ENCODE measurements at regions of chr6 and their contacts with region 1.

Region 1: DNA sequence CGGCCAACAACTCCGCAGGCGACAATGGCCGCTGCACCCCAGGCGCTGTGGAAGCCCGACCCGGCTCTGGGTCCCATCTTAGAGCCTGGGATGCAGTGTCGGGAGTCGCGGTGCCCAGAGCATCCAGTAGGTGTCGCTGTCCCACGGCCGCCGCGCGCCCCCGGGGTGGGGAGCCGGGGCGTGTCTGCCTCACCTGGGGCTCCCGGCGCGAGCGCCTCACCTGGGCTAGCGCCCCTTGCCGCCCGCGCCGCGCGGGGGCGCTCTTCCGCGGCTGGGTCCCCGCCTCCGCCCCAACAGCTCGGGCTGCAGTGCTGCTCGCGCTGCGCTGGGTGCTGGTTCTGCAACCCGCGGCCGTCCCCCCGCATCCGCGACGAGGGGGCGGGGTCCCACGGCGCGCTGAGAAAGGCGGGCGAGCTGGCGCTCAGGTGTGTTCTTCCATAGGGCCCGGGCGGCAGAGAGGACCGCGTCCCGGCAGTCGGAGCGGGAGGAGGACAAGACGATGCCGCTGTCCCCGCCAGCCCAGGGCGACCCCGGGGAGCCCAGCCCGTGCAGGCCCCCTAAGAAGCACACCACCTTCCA is at the start of gene CRYBG1:
- DNase-seq: peak; percentile 93
- ATAC-seq: peak; percentile 95
- H3K4me3 Mint-ChIP-seq: peak within 1 kb of the TSS; percentile 86
- H3K27ac Mint-ChIP-seq: no peak within 1 kb of the TSS
- H3K4me1 Mint-ChIP-seq: peaks cover 11% of the 10 kb centered on the region
- H3K27me3 Mint-ChIP-seq: peaks cover 18% of the 10 kb centered on the region
- CTCF ChIP-seq: peak; percentile 99
- total RNA-seq, gene CRYBG1: 9.1 to 10.1 TPM (median 9.3 TPM) in 3 replicates

Region 2: GRCh38 chr6:106339334-106340029 is 21.0 kb before region 1 on chr6:
- CTCF ChIA-PET with region 1: interaction called, 38 read pairs
- POLR2A ChIA-PET with region 1: no interaction called
- DNase-seq: peak; percentile 57
- ATAC-seq: peak; percentile 99
- H3K4me3 Mint-ChIP-seq: no peak overlapping the region
- H3K27ac Mint-ChIP-seq: no peak overlapping the region
- H3K4me1 Mint-ChIP-seq: peaks cover 3% of the 10 kb centered on the region
- H3K27me3 Mint-ChIP-seq: no peaks in the 10 kb centered on the region
- CTCF ChIP-seq: peak; percentile 84

Region 3: DNA sequence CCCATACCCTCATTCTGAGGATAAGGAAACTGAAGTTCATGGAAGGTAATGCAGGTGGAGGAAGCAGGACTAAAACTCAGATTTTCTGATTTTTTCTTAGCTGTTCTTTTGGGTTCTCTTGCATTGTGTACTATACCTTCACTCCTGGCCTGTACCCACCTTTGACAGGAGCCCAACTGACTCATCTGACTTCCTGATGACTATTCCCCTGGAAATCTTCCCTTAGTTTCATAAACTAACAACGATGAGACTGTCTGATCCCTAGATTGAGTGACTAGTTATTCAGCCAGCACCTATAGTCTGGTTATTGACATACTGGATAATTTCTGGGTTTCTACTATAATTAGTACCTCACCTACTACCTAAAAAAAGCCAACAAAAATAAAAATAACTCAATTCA is 10.1 kb after region 1 on chr6:
- CTCF ChIA-PET with region 1: interaction called, 18 read pairs
- POLR2A ChIA-PET with region 1: no interaction called
- DNase-seq: no peak
- ATAC-seq: no peak
- H3K4me3 Mint-ChIP-seq: no peak overlapping the region
- H3K27ac Mint-ChIP-seq: no peak overlapping the region
- H3K4me1 Mint-ChIP-seq: peaks cover 9% of the 10 kb centered on the region
- H3K27me3 Mint-ChIP-seq: no peaks in the 10 kb centered on the region
- CTCF ChIP-seq: no peak

Region 4: GRCh38 chr6:106415922-106416693 is 55.6 kb after region 1 on chr6:
- CTCF ChIA-PET with region 1: interaction called, 10 read pairs
- POLR2A ChIA-PET with region 1: no interaction called
- DNase-seq: no peak
- ATAC-seq: no peak
- H3K4me3 Mint-ChIP-seq: no peak overlapping the region
- H3K27ac Mint-ChIP-seq: no peak overlapping the region; the same call in 1 of the 2 replicates
- H3K4me1 Mint-ChIP-seq: peaks cover 16% of the 10 kb centered on the region
- H3K27me3 Mint-ChIP-seq: no peaks in the 10 kb centered on the region
- CTCF ChIP-seq: no peak

Region 5: GRCh38 chr6:106560996-106561685 is 200.6 kb after region 1 on chr6:
- CTCF ChIA-PET with region 1: interaction called, 12 read pairs
- POLR2A ChIA-PET with region 1: no interaction called
- DNase-seq: no peak
- ATAC-seq: no peak
- H3K4me3 Mint-ChIP-seq: no peak overlapping the region
- H3K27ac Mint-ChIP-seq: no peak overlapping the region
- H3K4me1 Mint-ChIP-seq: peaks cover 21% of the 10 kb centered on the region
- H3K27me3 Mint-ChIP-seq: no peaks in the 10 kb centered on the region
- CTCF ChIP-seq: no peak

Region 6: DNA sequence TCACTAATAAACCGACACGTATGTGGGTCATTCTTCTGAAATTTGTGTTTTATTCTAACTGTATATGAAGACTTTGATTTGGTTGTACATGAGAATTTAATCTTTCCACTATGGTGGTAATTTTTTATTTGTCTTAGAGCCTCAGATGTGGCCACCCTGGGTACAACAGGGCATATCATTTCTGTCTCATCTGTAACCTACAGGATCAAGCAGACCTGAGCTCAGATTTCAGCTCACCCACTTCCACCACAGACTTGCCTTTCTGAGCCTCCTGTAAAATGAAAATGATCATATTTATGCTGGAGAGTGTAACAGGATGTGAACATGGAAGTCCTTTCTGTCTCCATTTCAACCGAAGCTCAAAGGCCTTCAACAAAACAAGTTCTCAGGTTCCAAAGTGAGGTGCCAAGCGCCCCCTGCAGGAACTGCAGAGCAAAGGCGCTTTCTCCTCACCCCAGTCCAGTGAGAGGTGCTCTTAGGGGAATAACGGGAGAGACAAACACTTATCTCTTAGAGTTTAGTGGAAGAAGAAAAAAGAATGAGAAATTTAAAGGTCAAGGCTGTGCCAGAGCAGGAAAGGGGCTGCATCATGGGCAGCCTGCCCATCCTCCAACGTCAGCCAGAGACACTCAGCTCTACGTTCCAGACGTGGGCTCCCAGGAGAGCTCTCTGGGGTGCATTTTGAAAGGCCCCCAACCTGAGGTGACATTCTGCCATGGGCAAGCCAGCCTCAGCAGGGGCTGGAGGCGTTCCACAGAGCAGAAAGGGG is 637.1 kb after region 1 on chr6:
- CTCF ChIA-PET with region 1: interaction called, 12 read pairs
- POLR2A ChIA-PET with region 1: no interaction called
- DNase-seq: peak; percentile 86
- ATAC-seq: peak; percentile 91
- H3K4me3 Mint-ChIP-seq: no peak overlapping the region
- H3K27ac Mint-ChIP-seq: no peak overlapping the region
- H3K4me1 Mint-ChIP-seq: peaks cover 20% of the 10 kb centered on the region
- H3K27me3 Mint-ChIP-seq: no peaks in the 10 kb centered on the region; the same call in 1 of the 2 replicates
- CTCF ChIP-seq: peak; percentile 90

Measured in WTC11 (cell line).